GM18951 (cell line): ENCODE measurements at regions of chr1 and their contacts with region 1.

Region 1: GRCh38 chr1:155324611-155325528 is 4.2 kb downstream of the RUSC1 start:
- POLR2A ChIP-seq: no peak

Region 2: DNA sequence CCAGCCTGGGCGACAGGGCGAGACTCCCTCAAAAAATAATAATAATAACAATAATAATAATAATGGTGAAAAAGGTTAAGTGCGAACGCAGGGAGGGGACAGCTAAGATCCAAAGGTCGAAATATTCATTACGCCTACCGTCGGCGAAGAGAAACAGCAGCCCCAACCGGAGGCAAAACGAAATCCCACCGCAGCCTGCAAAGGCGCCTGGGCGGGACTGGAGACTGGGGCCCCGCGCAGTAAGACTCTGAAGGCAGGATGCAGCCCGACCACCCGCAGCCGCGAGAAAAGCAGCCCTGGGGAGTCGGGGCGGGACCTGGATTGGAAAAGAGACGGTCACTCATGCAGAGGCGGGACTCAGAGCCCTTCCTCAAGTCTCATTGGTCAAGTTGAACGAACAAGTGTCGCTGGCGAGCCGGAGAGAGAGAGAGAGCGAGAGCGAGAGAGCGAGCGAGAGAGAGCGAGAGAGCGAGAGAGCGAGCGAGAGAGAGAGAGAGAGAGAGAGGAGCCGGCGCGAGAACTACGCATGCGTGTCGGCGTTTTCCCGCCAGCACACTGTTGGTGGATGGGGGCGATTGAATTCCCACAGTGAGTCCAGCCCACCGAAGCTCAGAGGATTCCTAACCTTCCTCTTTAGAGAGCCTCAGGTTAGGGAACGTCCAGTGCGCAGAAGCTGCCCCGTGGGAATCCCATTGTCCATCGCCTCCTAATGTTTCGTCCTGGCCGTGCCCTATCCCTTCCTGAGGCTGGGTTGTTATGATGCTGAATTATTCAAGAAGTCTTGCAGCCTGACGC is 80.3 kb before region 1 on chr1:
- in situ Hi-C with region 1: loop called (anchors 5 kb)
- POLR2A ChIP-seq: peak; percentile 97

Region 3: DNA sequence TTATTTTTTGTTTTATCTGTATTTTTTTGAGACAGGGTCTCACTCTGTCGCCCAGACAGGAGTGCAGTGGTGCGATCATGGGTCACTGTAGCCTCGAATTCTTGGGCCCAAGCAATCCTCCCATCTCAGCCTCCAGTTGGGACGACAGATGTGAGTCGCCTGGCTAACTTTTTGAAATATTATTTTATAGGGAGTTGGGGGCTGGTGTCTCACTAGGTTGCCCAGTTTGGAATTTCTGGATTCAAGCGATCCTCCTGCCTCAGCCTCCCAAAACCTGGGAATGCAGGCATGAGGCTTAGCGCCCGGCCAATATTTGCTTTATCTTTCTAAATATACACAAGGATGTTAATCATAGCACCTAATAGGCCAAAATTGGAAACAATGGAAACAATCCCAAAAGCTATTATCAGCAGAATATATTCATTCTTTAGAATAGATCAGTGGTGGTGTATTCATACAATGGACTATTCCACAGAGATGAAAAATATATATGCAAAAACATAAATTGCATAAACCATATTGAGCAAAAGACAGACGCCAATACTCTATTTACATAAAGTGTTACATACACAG is 419.9 kb after region 1 on chr1:
- in situ Hi-C with region 1: no loop called
- POLR2A ChIP-seq: no peak